ENCODE measurements at regions of chr17 and their contacts with region 1.

Region 1: GRCh38 chr17:44066204-44066930 is at the start of gene LSM12:
- DNase-seq: peak; percentile 97
- ATAC-seq: peak; percentile 75
- H3K4me3 Mint-ChIP-seq: peak within 1 kb of the TSS; percentile 99
- H3K27ac Mint-ChIP-seq: peak within 1 kb of the TSS; percentile 97
- H3K4me1 Mint-ChIP-seq: peaks cover 35% of the 10 kb centered on the region
- H3K27me3 Mint-ChIP-seq: no peaks in the 10 kb centered on the region
- total RNA-seq, gene LSM12: 46.9 to 51.4 TPM

Region 2: GRCh38 chr17:44083250-44083849 is 17.0 kb after region 1 on chr17:
- POLR2A ChIA-PET with region 1: no interaction called
- DNase-seq: no peak
- ATAC-seq: no peak
- H3K4me3 Mint-ChIP-seq: no peak overlapping the region
- H3K27ac Mint-ChIP-seq: no peak overlapping the region
- H3K4me1 Mint-ChIP-seq: peaks cover 4% of the 10 kb centered on the region
- H3K27me3 Mint-ChIP-seq: no peaks in the 10 kb centered on the region

Region 3: GRCh38 chr17:44123356-44124117 is 57.2 kb after region 1 on chr17 and contains the start of gene HDAC5:
- POLR2A ChIA-PET with region 1: interaction called, 10 read pairs
- DNase-seq: peak; percentile 94
- ATAC-seq: peak; percentile 94
- H3K4me3 Mint-ChIP-seq: peak within 1 kb of the TSS; percentile 94
- H3K27ac Mint-ChIP-seq: peak within 1 kb of the TSS; percentile 98
- H3K4me1 Mint-ChIP-seq: peaks cover 12% of the 10 kb centered on the region
- H3K27me3 Mint-ChIP-seq: peaks cover 8% of the 10 kb centered on the region
- total RNA-seq, gene HDAC5: 46.2 to 48.4 TPM

Region 4: DNA sequence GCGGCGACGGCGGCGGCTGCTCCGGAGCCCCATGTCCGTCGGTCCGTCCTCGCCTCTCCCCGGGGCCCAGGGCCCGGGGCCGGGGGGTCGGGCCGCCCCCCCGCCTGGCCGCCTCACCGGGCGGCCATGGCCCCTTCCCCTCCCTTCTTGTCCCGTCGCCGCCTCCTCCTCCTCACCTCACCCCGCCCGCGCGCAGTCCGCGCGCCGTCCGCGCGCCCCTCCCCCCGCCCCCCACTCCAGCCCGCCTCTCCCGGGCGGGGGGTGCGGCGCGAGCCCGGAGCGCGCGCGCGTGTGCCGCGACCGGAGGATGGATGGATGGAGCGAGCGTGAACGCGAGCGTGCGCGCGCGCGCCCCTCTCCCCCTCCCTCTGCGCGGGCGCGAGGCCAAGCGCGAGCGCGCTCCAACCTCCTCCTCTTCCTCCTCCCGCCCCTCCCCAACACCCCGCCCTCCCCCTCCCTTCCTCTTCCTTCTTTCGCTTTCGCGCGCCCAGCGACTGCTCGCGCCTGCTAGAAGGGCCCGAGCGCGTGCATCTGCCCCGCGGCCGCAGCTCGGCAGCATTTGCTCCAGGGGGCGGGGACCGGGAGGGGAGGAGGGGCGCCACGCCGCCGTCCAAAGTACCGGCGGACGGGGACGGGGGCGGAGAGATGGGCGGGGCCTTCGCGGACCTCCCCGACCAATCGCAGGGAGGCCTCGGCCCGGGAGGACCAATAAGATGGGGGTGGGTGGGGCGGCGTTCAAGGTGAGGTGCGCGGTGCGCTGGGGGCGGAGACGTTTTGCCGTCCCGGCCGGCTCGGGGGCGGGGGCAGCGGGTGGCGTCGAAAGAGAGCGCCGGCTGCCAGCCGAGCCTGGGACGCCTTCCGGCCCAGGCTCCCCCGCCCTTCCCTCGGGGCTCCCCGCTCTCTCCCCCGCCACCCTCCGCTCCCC is 133.4 kb after region 1 on chr17 and contains the start of gene ATXN7L3:
- POLR2A ChIA-PET with region 1: no interaction called
- DNase-seq: peak; percentile 98
- ATAC-seq: peak; percentile 71
- H3K4me3 Mint-ChIP-seq: peak within 1 kb of the TSS; percentile 95
- H3K27ac Mint-ChIP-seq: peak within 1 kb of the TSS; percentile 97
- H3K4me1 Mint-ChIP-seq: peaks cover 45% of the 10 kb centered on the region
- H3K27me3 Mint-ChIP-seq: no peaks in the 10 kb centered on the region
- total RNA-seq, gene ATXN7L3: 116 TPM

Measured in activated naive CD8-positive, alpha-beta T cell treated with anti-CD3 and anti-CD28 coated beads, Interleukin-2, amount 10 ng/mL, durations not matched to agents 7 days and 5 days (primary cell).